CD4-positive, alpha-beta T cell (primary cell): ENCODE measurements at regions of chr6 and their contacts with region 1.

Region 1: GRCh38 chr6:162736961-162737360 is 9.2 kb downstream of the PACRG start:
- DNase-seq: peak in 3 of 14 experiments; percentile 4 to 24 (median 8)
- ATAC-seq: no peak
- H3K4me3 ChIP-seq: no peak overlapping the region
- H3K4me3 Mint-ChIP-seq: no peak overlapping the region
- H3K27ac ChIP-seq: no peak overlapping the region
- H3K27ac Mint-ChIP-seq: no peak overlapping the region
- H3K4me1 ChIP-seq: peaks cover 5% of the 10 kb centered on the region
- H3K4me1 Mint-ChIP-seq: peaks cover 11% of the 10 kb centered on the region
- H3K27me3 ChIP-seq: no peaks in the 10 kb centered on the region
- H3K27me3 Mint-ChIP-seq: peaks cover 5% of the 10 kb centered on the region
- CTCF ChIP-seq: no peak

Region 2: DNA sequence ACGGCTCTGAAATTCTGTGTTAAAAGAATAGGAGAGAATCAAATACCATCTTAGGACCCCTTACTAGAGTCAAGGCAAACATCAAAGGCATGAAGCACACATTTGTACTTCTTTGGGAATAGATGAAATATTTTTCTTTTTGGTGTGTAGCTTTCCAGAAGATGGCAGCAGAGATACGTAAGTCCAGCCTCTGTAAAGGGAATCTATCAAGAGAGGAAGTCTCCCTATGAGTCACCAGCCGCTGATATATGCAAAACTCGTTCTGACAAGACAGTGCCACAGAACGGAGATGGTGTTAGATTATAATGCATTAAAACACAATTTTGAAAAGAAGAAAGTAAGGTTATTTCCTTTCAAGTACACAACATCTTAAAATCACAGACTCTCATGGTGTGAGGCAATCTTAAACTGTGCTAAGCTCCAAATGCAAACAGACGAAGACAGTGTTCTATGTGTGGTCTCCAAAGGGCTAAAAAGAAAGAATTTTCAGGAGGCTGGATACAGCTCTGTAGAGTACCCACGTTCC is 1343.1 kb before region 1 on chr6:
- CTCF ChIA-PET with region 1: no interaction called
- POLR2A ChIA-PET with region 1: no interaction called
- intact Hi-C with region 1: loop called in 1 of 2 experiments (anchors 10 kb)
- DNase-seq: peak in 11 of 14 experiments; percentile 7 to 87 (median 35)
- ATAC-seq: peak; percentile 90
- H3K4me3 ChIP-seq: no peak overlapping the region
- H3K4me3 Mint-ChIP-seq: no peak overlapping the region
- H3K27ac ChIP-seq: no peak overlapping the region
- H3K27ac Mint-ChIP-seq: no peak overlapping the region
- H3K4me1 ChIP-seq: peaks cover 5% of the 10 kb centered on the region
- H3K4me1 Mint-ChIP-seq: no peaks in the 10 kb centered on the region
- H3K27me3 ChIP-seq: no peaks in the 10 kb centered on the region
- H3K27me3 Mint-ChIP-seq: no peaks in the 10 kb centered on the region
- CTCF ChIP-seq: peak; percentile 58

Region 3: DNA sequence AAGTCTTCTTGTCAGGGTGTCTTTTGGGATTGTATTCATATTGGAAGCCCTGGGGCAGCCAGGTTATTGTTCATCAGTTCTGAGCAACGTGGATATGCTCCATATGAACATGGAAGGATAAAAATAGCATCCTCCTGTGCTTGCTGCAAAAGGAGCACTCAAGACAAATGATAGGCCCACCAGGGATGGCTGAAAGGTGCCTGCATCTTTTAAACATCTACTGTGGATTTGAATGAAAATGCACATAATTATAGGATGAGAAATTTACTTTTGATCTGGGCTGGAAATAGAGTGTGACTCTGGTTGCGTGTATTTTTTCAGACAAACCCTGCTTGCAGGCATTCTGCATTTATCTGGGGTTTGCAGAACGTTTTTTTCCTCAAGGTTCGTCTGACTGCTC is 289.9 kb after region 1 on chr6:
- CTCF ChIA-PET with region 1: no interaction called
- POLR2A ChIA-PET with region 1: no interaction called
- intact Hi-C with region 1: no loop called
- DNase-seq: no peak
- ATAC-seq: no peak
- H3K4me3 ChIP-seq: no peak overlapping the region
- H3K4me3 Mint-ChIP-seq: no peak overlapping the region
- H3K27ac ChIP-seq: no peak overlapping the region
- H3K27ac Mint-ChIP-seq: no peak overlapping the region
- H3K4me1 ChIP-seq: no peaks in the 10 kb centered on the region
- H3K4me1 Mint-ChIP-seq: no peaks in the 10 kb centered on the region
- H3K27me3 ChIP-seq: no peaks in the 10 kb centered on the region
- H3K27me3 Mint-ChIP-seq: no peaks in the 10 kb centered on the region
- CTCF ChIP-seq: no peak